Sigmoid colon (tissue), 7 donors: ENCODE measurements at regions of chr18 and their contacts with region 1.

Region 1: DNA sequence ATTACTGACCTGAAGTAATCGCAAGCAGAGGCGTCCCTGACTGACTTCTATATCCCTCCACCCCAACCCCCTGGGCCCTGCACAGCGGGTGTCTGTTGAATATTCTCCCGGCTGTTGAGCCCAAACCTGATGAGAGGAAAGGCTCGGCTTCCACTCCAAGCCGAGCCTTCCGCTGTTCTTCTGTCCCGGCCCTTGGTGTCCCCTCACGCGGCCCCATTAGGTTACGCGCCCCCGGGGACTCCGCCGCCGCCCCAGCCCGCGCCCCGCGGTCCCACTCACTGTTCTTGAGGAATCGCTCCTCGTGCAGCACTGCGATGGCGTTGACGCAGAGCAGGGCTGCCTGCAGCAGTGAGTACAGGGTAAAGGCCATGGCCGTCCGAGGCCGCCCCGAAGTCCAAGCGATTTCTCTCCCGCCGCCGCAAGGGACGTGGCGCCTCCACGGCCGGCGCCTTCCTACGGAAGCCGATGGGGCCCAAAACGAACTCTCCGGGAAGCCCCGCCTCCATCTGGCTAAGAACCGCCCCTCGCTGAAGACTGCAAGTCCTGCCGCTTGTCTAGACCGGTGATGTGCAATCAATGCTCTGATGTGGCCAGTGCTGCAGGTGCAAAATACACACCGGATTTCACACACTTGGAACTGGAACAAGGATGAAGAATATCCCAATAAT is at the start of gene IER3IP1:
- DNase-seq: peak; percentile 94
- H3K4me3 ChIP-seq: peak within 1 kb of the TSS; percentile 78 to 96 (median 88)
- H3K27ac ChIP-seq: peak within 1 kb of the TSS; percentile 80 to 84 (median 82)
- H3K4me1 ChIP-seq: peaks cover 0 to 24% (median 20%) of the 10 kb centered on the region in 4 donors
- H3K27me3 ChIP-seq: no peaks in the 10 kb centered on the region
- CTCF ChIP-seq: peak in 1 of 4 experiments; percentile 23
- EP300 ChIP-seq: no peak
- POLR2A ChIP-seq: peak in 1 of 2 donors; percentile 62
- total RNA-seq, gene IER3IP1: 7.1 to 15.7 (median 11.8) TPM

Region 2: GRCh38 chr18:47150029-47150823 is 25.8 kb before region 1 on chr18 and contains the start of gene HDHD2:
- intact Hi-C with region 1: loop called (anchors 1 kb)
- DNase-seq: peak; percentile 90
- H3K4me3 ChIP-seq: peak within 1 kb of the TSS; percentile 66 to 73 (median 66)
- H3K27ac ChIP-seq: peak within 1 kb of the TSS; percentile 88 to 94 (median 90)
- H3K4me1 ChIP-seq: peaks cover 0 to 23% (median 18%) of the 10 kb centered on the region in 4 donors
- H3K27me3 ChIP-seq: no peaks in the 10 kb centered on the region
- CTCF ChIP-seq: no peak
- EP300 ChIP-seq: peak in 1 of 4 donors; percentile 32
- POLR2A ChIP-seq: peak; percentile 85 to 93
- total RNA-seq, gene HDHD2: 21.0 to 30.3 (median 25.6) TPM